K562 (cell line): ENCODE measurements at regions of chr20 and their contacts with region 1.

Region 1: DNA sequence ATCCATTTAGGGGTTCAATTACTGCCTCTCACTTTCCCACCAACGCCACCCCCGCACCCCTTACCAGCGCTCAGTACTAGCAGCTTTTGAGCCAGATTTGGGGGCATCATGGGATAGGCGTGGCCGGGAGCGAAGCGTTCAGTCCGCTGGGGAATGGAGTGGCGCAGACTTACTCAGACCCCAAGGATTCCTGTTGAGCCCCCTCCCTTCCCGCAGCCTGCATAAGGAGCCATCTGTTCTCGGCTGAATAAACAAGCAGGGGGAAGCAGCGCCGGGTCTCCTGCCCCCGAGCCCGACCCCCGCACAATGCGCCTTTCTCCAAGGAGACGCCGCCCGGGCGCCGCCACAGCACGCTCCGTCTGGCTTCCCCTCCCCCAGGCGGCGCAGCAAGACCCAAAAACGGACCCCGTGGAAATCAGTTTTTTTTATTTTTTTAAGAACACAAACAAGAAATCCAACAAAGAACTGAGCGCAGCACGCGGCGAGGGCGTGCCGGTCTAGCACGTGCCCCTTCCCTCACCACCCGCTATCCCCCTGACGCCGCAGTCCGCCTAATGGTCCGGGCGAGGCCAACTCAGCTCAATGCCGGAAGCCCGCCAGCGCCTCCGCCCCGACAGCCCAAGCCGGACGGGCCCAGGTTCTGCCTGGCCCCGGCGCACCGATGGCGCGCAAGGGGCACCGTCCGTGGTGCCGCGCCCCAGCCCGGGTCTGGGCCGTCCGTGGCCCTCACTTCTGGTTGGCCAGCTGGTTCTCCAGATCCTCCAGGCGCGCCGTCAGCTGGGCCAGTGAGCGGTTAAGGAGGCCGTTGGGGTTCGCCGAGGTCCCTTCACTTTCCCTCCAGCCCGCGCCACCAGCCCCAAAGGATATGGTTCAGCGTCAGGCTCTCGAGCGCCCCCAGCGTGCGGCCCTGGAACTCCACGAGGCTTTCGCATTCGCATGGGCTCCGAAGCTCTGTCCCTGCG is 13.3 kb upstream of the RBPJL start:
- DNase-seq: peak; percentile 83 to 88 (median 85)
- ATAC-seq: peak; percentile 93
- H3K4me3 ChIP-seq: peak overlapping the region; percentile 45
- H3K27ac ChIP-seq: no peak overlapping the region
- H3K4me1 ChIP-seq: peaks cover 10 to 18% of the 10 kb centered on the region in 2 experiments; a peak in 4 of 5 replicates
- H3K27me3 ChIP-seq: peaks cover 15 to 56% of the 10 kb centered on the region in 2 experiments; a peak in 4 of 5 replicates
- CTCF ChIP-seq: peak; percentile 80 to 92 (median 86)
- EP300 ChIP-seq: no peak
- POLR2A ChIP-seq: peak; percentile 51; the same call in 1 of the 2 replicates
- RAD21 ChIP-seq: peak in 1 of 2 experiments; percentile 27; a peak in 2 of 4 replicates

Region 2: DNA sequence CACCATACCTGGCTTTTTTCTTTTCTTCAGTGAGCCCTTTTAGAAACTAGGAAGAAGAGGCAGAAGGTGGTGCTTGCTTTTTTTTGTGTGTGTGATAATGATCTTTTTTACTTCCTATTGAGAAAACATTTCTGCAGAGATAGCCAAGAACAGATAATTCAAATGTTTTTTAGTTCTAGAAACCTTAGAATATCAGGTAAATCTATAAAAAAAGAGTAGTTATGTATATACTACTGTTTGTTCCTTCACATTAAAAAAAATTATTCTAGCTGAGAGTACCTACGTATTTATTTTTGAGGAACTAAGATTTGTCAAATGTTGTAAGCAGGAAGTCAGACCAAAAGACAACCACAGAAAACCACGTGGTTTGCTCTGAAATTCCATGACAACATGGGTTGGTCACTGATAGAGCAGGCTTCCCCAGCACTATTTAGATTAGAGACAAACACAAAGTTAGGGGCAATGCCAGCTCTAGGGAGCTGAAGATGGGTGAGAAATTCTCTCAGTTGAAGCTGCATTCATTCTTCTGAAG is 314.2 kb before region 1 on chr20:
- CTCF ChIA-PET with region 1: no interaction called
- POLR2A ChIA-PET with region 1: no interaction called
- in situ Hi-C with region 1: no loop called
- intact Hi-C with region 1: no loop called
- DNase-seq: peak in 2 of 4 experiments; percentile 49 to 65
- ATAC-seq: peak; percentile 91
- H3K4me3 ChIP-seq: no peak overlapping the region
- H3K27ac ChIP-seq: peak overlapping the region; percentile 66
- H3K4me1 ChIP-seq: peaks cover 11 to 15% of the 10 kb centered on the region in 2 experiments; a peak in 4 of 5 replicates
- H3K27me3 ChIP-seq: no peaks in the 10 kb centered on the region
- CTCF ChIP-seq: no peak
- EP300 ChIP-seq: no peak; the same call in 1 of the 2 replicates
- POLR2A ChIP-seq: no peak
- RAD21 ChIP-seq: no peak

Region 3: DNA sequence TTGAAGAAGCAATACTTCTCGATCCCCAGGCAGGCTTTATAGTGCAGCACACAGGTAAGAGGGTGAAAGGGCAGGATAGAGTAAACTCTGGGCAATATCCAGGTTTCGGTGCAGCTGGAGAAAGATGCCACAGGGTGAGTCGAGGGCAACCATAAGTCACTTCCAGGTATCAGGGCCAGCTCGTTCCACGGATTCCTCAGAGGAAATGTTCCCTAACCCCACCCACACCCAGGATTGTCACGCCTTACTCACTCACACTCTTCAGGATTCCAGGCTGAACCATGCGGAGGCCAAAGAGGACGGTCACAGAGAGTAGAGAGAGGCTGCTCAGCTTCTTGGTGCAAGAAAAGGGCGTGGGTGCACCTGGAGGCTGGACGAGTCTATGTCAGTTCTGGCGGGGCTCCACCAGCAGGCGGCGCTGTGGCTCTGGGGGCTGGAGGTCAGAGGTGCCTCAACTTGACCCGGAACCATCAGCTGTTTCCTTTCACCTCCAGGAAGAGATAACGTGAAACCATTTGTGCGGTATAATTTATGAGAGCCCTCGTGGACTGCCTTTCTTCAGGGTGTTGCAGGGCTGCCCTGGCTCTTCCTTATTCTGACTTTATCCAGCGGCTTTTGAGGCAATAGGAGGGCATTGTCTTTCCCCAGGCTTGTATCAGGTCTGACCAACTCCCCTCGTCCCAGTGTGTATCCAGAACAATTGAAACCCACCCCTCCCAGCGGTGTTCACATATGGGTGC is 154.6 kb before region 1 on chr20:
- CTCF ChIA-PET with region 1: interaction called, 3 read pairs
- POLR2A ChIA-PET with region 1: no interaction called
- in situ Hi-C with region 1: no loop called
- intact Hi-C with region 1: loop called (anchors 2 kb)
- DNase-seq: peak; percentile 76 to 83 (median 78)
- ATAC-seq: peak; percentile 98
- H3K4me3 ChIP-seq: no peak overlapping the region
- H3K27ac ChIP-seq: no peak overlapping the region
- H3K4me1 ChIP-seq: no peaks in the 10 kb centered on the region
- H3K27me3 ChIP-seq: peaks cover 0 to 15% of the 10 kb centered on the region in 2 experiments; a peak in 4 of 5 replicates
- CTCF ChIP-seq: peak; percentile 87 to 95 (median 95)
- EP300 ChIP-seq: no peak
- POLR2A ChIP-seq: no peak
- RAD21 ChIP-seq: peak; percentile 18 to 77; a peak in 2 of 4 replicates

Region 4: DNA sequence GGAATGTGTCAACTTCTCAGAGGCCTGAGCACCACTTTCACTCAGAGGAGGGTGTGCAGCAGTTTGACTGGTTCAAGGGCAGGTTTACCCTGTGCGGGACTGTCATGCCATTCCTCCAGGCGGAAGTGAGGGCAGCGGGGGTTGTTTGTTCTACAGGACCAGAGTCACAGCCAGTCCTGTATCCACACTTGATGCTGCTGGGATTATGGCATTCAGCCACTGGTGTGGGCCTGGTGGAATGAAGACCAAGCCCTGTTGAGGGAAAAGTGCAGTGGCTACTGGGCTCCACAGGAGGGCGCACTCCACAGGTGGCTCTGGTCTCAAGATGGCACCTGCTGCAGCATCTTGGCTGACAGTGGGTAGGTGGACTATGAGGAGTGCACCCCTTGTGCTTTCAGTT is 57.3 kb before region 1 on chr20:
- CTCF ChIA-PET with region 1: no interaction called
- POLR2A ChIA-PET with region 1: no interaction called
- in situ Hi-C with region 1: no loop called
- intact Hi-C with region 1: loop called (anchors 5 kb)
- DNase-seq: peak; percentile 13 to 32 (median 21)
- ATAC-seq: peak; percentile 68
- H3K4me3 ChIP-seq: no peak overlapping the region
- H3K27ac ChIP-seq: no peak overlapping the region
- H3K4me1 ChIP-seq: no peaks in the 10 kb centered on the region
- H3K27me3 ChIP-seq: peaks cover 0 to 3% of the 10 kb centered on the region in 2 experiments; a peak in 1 of 5 replicates
- CTCF ChIP-seq: peak; percentile 54 to 74 (median 66)
- EP300 ChIP-seq: no peak
- POLR2A ChIP-seq: no peak
- RAD21 ChIP-seq: peak in 1 of 2 experiments; percentile 13; a peak in 1 of 4 replicates

Region 5: GRCh38 chr20:45306431-45306982 is 13.2 kb after region 1 on chr20 and contains the start of gene RBPJL:
- CTCF ChIA-PET with region 1: no interaction called
- POLR2A ChIA-PET with region 1: interaction called, 10 read pairs
- in situ Hi-C with region 1: no loop called
- intact Hi-C with region 1: no loop called
- DNase-seq: peak; percentile 61 to 82 (median 74)
- ATAC-seq: peak; percentile 84
- H3K4me3 ChIP-seq: no peak within 1 kb of the TSS
- H3K27ac ChIP-seq: no peak within 1 kb of the TSS
- H3K4me1 ChIP-seq: peaks cover 4 to 27% of the 10 kb centered on the region in 2 experiments; a peak in 3 of 5 replicates
- H3K27me3 ChIP-seq: peaks cover 0 to 48% of the 10 kb centered on the region in 2 experiments; a peak in 3 of 5 replicates
- CTCF ChIP-seq: peak; percentile 75 to 94 (median 87)
- EP300 ChIP-seq: no peak
- POLR2A ChIP-seq: no peak
- RAD21 ChIP-seq: peak in 1 of 2 experiments; percentile 39; a peak in 2 of 4 replicates
- polyA plus RNA-seq, gene RBPJL: not detected

Region 6: GRCh38 chr20:45322952-45323383 is 29.6 kb after region 1 on chr20:
- CTCF ChIA-PET with region 1: no interaction called
- POLR2A ChIA-PET with region 1: no interaction called
- in situ Hi-C with region 1: no loop called
- intact Hi-C with region 1: no loop called
- DNase-seq: peak in 3 of 4 experiments; percentile 41 to 84 (median 73)
- ATAC-seq: peak; percentile 92
- H3K4me3 ChIP-seq: no peak overlapping the region
- H3K27ac ChIP-seq: no peak overlapping the region
- H3K4me1 ChIP-seq: peaks cover 4 to 9% of the 10 kb centered on the region in 2 experiments; a peak in 4 of 5 replicates
- H3K27me3 ChIP-seq: no peaks in the 10 kb centered on the region
- CTCF ChIP-seq: peak; percentile 78 to 94 (median 81)
- EP300 ChIP-seq: no peak
- POLR2A ChIP-seq: no peak
- RAD21 ChIP-seq: peak; percentile 95 to 97